ENCODE measurements at regions of chr7 and their contacts with region 1.

Region 1: DNA sequence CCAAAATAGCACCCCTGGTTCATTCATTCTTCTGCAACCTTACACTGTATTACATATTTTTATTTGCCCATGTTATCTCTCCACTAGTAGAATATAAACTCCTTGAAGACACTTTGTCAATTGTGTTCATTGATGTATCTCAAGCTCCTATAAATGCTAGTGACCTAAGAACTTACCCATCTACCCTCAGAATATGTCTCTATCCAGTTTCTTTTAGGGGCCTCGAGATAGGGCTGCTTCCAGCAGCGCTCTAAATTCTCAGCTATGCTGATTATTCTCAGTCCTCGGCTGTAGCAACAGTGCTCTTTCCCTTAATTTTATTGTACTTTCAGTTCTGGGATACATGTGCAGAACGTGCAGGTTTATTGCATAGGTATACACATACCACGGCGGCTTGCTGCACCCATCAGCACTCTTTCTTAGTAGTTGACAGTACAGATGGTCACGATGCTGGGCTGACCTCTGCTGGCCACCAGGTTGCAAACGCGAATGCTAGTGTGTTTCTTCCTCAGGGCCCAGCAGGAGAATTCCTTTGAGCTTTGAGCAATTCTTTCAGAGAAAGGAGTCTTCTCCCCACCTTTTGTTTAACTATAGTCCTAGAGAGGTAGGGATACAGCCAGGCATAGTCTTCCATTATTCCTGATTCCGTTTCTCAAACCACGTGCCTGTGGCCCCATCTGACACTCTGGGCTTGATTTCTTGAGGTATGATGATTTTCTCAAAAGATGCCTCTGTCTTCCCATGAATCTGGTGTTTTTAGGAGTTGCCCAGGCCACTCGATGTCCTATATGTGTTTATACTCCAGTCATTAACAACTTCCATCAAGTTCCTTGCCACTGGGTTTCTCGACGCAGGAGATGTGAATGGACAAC is 49.1 kb upstream of the CDC14C start:
- DNase-seq: no peak

Region 2: GRCh38 chr7:48299580-48300169 is 575.6 kb before region 1 on chr7:
- intact Hi-C with region 1: loop called (anchors 5 kb)
- DNase-seq: no peak

Region 3: DNA sequence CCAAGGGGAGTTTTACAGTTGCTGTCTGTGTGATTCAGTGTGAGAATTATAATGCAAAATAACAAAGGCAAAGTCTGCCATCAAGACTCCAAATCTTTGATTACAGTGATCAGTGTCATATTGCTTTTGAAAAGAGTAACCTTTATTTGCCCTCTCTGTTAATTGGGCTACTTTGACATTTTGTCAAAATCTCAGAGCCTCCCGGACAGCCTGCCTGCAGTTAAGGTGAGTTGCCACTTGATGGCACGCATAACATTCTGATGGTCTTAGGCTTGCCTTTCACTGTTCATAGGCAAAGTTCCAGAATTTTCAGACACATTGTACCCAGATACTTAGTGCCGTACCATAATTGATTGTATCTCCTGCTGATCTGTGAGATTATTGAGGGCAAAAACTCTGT is 450.6 kb before region 1 on chr7:
- intact Hi-C with region 1: loop called (anchors 5 kb)
- DNase-seq: no peak